Heart left ventricle (tissue), 16 donors: ENCODE measurements at regions of chr15 and their contacts with region 1.

Region 1: GRCh38 chr15:29870495-29871151 is 48.4 kb upstream of the TJP1 start:
- DNase-seq: peak in 4 of 5 donors; percentile 52 to 67 (median 58)
- ATAC-seq: peak; percentile 69 to 86 (median 74)
- H3K4me3 ChIP-seq: peak overlapping the region in 6 of 12 donors; percentile 3 to 32 (median 20)
- H3K27ac ChIP-seq: peak overlapping the region; percentile 56 to 89 (median 77)
- H3K4me1 ChIP-seq: peaks cover 0 to 48% (median 33%) of the 10 kb centered on the region in 12 donors
- H3K27me3 ChIP-seq: no peaks in the 10 kb centered on the region
- CTCF ChIP-seq: no peak
- POLR2A ChIP-seq: no peak

Region 2: DNA sequence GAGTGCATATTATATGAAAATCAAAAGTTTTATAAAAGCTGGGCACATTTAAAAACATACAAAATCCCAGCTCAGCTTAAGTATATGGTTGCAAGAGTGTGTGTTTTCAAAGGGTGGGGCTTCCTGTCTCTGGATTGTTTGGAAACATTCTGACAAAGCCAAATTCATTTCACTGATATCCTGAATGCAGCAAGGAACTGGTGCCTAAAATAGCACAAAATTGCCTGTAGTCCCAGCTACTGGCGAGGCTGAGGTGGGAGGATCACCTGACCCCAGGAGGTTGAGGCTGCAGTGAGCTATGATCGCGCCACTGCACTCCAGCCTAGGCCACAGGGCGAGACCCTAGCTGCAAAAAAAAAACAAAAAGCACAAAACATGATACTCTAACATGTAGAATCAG is 35.3 kb before region 1 on chr15:
- intact Hi-C with region 1: loop called in 2 of 10 experiments (anchors 5 kb)
- DNase-seq: peak in 4 of 5 donors; percentile 39 to 48 (median 42)
- ATAC-seq: peak; percentile 74 to 92 (median 84)
- H3K4me3 ChIP-seq: no peak overlapping the region
- H3K27ac ChIP-seq: peak overlapping the region in 11 of 12 donors; percentile 43 to 78 (median 63)
- H3K4me1 ChIP-seq: peaks cover 0 to 45% (median 18%) of the 10 kb centered on the region in 12 donors
- H3K27me3 ChIP-seq: no peaks in the 10 kb centered on the region
- CTCF ChIP-seq: no peak
- POLR2A ChIP-seq: no peak

Region 3: GRCh38 chr15:29904757-29905417 is 34.3 kb after region 1 on chr15:
- intact Hi-C with region 1: loop called in 3 of 10 experiments (anchors 5 kb)
- DNase-seq: no peak
- ATAC-seq: no peak
- H3K4me3 ChIP-seq: no peak overlapping the region
- H3K27ac ChIP-seq: no peak overlapping the region
- H3K4me1 ChIP-seq: peaks cover 0 to 17% (median 7%) of the 10 kb centered on the region in 12 donors
- H3K27me3 ChIP-seq: no peaks in the 10 kb centered on the region
- CTCF ChIP-seq: no peak
- POLR2A ChIP-seq: no peak

Region 4: DNA sequence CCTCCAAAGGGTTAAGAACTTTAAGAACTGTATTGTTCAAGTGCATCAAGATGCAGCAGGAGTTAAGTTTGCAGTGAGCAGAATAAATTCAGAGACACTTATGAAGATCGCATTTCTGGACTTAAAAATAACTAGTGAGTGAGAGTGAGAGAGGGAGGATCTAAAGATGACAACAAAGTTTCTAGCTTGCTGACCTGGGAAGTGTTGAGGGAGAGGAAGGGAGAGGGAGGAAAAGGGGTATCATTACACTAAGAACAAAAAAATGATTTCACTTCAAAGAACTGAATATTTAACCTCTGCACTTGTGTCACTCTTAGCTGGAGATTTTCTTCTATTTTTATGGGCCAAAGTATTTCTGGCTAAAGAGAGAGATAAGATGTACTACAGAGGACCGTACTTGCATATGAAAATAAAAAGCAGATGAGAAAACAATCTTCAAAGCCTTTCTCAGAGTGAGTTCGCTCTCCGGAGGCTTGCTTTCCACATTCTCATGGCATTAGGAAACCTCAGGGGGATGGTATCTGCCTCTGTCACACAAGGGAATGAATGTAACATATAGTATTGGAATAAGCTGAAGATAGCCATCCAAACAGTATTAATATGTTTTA is 43.0 kb after region 1 on chr15:
- intact Hi-C with region 1: loop called in 5 of 10 experiments (anchors 5 kb)
- DNase-seq: no peak
- ATAC-seq: peak; percentile 38 to 65 (median 50)
- H3K4me3 ChIP-seq: peak overlapping the region in 2 of 12 donors; percentile 2 to 8
- H3K27ac ChIP-seq: peak overlapping the region; percentile 11 to 81 (median 63)
- H3K4me1 ChIP-seq: peaks cover 0 to 56% (median 30%) of the 10 kb centered on the region in 12 donors
- H3K27me3 ChIP-seq: no peaks in the 10 kb centered on the region
- CTCF ChIP-seq: no peak
- POLR2A ChIP-seq: no peak

Region 5: GRCh38 chr15:29942143-29942542 is 71.5 kb after region 1 on chr15:
- intact Hi-C with region 1: no loop called
- DNase-seq: no peak
- ATAC-seq: peak in 2 of 4 donors; percentile 41 to 54
- H3K4me3 ChIP-seq: no peak overlapping the region
- H3K27ac ChIP-seq: no peak overlapping the region
- H3K4me1 ChIP-seq: peaks cover 0 to 4% (median 0%) of the 10 kb centered on the region in 12 donors
- H3K27me3 ChIP-seq: no peaks in the 10 kb centered on the region
- CTCF ChIP-seq: peak in 8 of 12 donors; percentile 16 to 42 (median 34)
- POLR2A ChIP-seq: no peak